Activated B cell treated with CpG ODN at 0.5 μM for 24 hours (primary cell): ENCODE measurements at regions of chr19 and their contacts with region 1.

Region 1: DNA sequence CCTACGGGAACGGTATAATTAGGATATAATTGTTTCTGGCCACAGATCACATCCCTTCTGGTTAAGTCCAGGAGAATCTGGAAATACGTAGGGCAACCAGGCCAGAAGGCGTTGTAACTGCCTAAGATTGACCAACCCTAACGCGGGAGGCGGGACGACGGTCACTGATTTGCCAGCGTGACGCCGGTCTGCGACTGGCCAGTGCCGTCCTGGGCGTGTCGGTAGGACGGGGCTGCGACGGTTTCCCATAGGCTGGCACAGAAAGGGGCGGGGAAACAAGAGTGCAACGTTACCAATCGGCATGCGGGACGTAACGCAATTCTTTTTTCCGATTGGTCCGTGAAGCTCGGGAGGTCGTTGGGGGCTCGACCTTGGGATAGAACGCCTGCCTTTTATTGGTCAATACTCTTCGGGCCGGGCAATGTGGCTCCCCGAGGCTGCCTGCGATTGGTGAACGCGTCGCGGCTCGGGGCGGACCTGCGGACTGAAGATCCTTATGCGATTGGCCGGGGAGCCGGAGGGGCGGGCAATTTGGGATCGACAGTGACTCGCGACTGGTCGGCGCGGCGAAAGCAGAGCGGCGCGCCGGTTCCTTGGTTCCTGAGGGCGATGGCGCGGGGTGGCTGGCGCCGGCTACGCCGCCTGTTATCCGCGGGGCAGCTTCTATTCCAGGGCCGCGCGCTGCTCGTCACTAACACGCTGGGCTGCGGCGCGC is at the start of gene MPV17L2:
- DNase-seq: peak; percentile 90
- ATAC-seq: peak; percentile 83
- H3K4me3 Mint-ChIP-seq: peak within 1 kb of the TSS; percentile 87
- H3K27ac Mint-ChIP-seq: peak within 1 kb of the TSS; percentile 95
- H3K4me1 Mint-ChIP-seq: peaks cover 40% of the 10 kb centered on the region
- H3K27me3 Mint-ChIP-seq: no peaks in the 10 kb centered on the region
- CTCF ChIP-seq: no peak
- total RNA-seq, gene MPV17L2: 17.3 and 17.9 TPM in 2 replicates

Region 2: DNA sequence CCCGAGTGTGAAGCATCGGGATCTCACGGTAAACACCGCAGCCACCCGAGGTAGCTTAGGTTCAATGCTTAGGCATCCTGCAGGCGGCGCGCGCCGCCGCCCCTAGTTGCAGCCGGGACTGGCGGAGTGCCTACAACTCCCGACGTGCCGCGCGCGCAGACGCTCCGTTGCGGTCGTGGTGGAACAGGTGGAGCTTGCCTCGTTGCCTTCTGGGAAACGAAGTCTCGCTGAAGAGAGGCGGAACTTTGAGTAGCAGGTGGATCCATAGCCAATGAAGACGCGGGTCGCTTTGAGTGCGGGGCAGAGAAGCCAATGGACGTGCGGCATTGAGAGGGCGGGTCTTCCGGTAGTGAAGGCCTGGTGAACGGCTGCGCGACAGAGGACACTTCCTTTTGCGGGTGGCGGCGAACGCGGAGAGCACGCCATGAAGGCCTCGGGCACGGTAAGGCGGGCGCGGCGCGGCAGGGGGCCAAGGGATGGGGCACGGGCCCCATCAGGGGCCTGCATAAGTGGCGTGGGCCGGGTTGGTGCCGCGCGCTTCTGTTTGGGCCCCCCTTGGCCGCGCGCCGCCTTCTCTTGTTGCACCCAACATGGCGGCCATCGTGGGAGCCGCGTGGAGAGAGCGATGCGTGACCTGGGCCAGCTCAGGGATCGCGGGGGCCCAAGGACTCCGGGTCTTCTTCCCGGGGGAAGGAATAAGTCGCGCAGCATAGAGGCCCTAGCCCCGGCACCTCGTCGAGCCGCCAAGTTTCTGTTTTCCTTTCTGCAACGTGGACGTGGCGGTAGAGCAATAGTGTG is 333.1 kb before region 1 on chr19 and contains the start of gene RPL18A:
- CTCF ChIA-PET with region 1: no interaction called
- POLR2A ChIA-PET with region 1: no interaction called
- intact Hi-C with region 1: no loop called
- DNase-seq: peak; percentile 85
- ATAC-seq: peak; percentile 91
- H3K4me3 Mint-ChIP-seq: peak within 1 kb of the TSS; percentile 99
- H3K27ac Mint-ChIP-seq: peak within 1 kb of the TSS; percentile 98
- H3K4me1 Mint-ChIP-seq: peaks cover 47% of the 10 kb centered on the region
- H3K27me3 Mint-ChIP-seq: no peaks in the 10 kb centered on the region
- CTCF ChIP-seq: no peak
- total RNA-seq, gene RPL18A: 4,113 and 4,404 TPM in 2 replicates

Region 3: GRCh38 chr19:18007044-18007916 is 185.6 kb before region 1 on chr19:
- CTCF ChIA-PET with region 1: no interaction called
- POLR2A ChIA-PET with region 1: interaction called, 14 read pairs
- intact Hi-C with region 1: no loop called
- DNase-seq: peak; percentile 83
- ATAC-seq: peak; percentile 61
- H3K4me3 Mint-ChIP-seq: peak overlapping the region; percentile 93
- H3K27ac Mint-ChIP-seq: peak overlapping the region; percentile 92
- H3K4me1 Mint-ChIP-seq: peaks cover 40% of the 10 kb centered on the region
- H3K27me3 Mint-ChIP-seq: no peaks in the 10 kb centered on the region
- CTCF ChIP-seq: peak; percentile 84

Region 4: GRCh38 chr19:18160971-18161635 is 31.7 kb before region 1 on chr19:
- CTCF ChIA-PET with region 1: interaction called, 5 read pairs
- POLR2A ChIA-PET with region 1: interaction called, 14 read pairs
- intact Hi-C with region 1: no loop called
- DNase-seq: peak; percentile 90
- ATAC-seq: peak; percentile 97
- H3K4me3 Mint-ChIP-seq: peak overlapping the region; percentile 24
- H3K27ac Mint-ChIP-seq: peak overlapping the region; percentile 18
- H3K4me1 Mint-ChIP-seq: peaks cover 16% of the 10 kb centered on the region
- H3K27me3 Mint-ChIP-seq: no peaks in the 10 kb centered on the region
- CTCF ChIP-seq: no peak

Region 5: DNA sequence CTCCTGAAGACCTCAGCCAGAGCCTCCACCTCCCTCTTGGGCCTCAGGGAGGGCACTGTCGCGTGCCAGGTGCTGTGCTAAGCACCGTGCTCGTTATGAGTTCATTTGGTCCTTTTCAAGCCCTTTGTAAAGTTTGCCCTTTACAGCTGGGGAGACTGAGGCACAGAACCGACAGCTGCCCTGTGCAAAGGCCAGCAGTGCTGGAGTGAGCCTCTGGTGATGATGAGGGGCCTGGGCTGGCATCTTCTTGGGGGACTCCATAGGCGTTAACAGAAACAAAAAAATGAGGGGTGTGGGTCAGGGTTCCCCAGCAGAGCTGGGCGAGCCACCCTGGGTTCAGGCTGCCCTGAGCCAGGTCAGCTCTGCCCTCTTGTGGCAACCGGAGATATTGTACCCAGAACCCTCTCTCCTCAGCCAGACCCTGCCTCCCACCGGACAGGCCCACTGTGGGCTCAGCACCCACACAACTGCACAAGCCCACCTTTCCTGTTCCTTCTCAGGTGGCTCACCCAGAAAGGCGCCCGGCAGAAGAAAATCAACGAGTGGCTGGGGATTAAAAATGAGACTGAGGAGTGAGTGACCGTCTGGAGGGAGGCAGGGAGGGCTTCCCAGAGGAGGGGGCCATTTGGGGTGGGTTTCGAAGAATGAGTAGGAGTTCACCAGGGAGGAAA is 24.7 kb before region 1 on chr19:
- CTCF ChIA-PET with region 1: interaction called, 19 read pairs
- POLR2A ChIA-PET with region 1: interaction called, 437 read pairs
- intact Hi-C with region 1: loop called (anchors 1 kb)
- DNase-seq: peak; percentile 52
- ATAC-seq: peak; percentile 34
- H3K4me3 Mint-ChIP-seq: peak overlapping the region; percentile 66
- H3K27ac Mint-ChIP-seq: peak overlapping the region; percentile 82
- H3K4me1 Mint-ChIP-seq: peaks cover 53% of the 10 kb centered on the region
- H3K27me3 Mint-ChIP-seq: no peaks in the 10 kb centered on the region
- CTCF ChIP-seq: peak; percentile 44

Region 6: GRCh38 chr19:18173572-18174288 is 19.1 kb before region 1 on chr19 and contains the start of gene IFI30:
- CTCF ChIA-PET with region 1: interaction called, 19 read pairs
- POLR2A ChIA-PET with region 1: interaction called, 437 read pairs
- intact Hi-C with region 1: loop called (anchors 1 kb)
- DNase-seq: peak; percentile 85
- ATAC-seq: peak; percentile 62
- H3K4me3 Mint-ChIP-seq: peak within 1 kb of the TSS; percentile 94
- H3K27ac Mint-ChIP-seq: peak within 1 kb of the TSS; percentile 92
- H3K4me1 Mint-ChIP-seq: peaks cover 90% of the 10 kb centered on the region
- H3K27me3 Mint-ChIP-seq: no peaks in the 10 kb centered on the region
- CTCF ChIP-seq: no peak
- total RNA-seq, gene IFI30: 251 and 255 TPM in 2 replicates

Region 7: GRCh38 chr19:18179957-18180356 is 12.9 kb before region 1 on chr19:
- CTCF ChIA-PET with region 1: interaction called, 23 read pairs
- POLR2A ChIA-PET with region 1: interaction called, 437 read pairs
- intact Hi-C with region 1: loop called (anchors 1 kb)
- DNase-seq: no peak
- ATAC-seq: peak; percentile 23
- H3K4me3 Mint-ChIP-seq: peak overlapping the region; percentile 53
- H3K27ac Mint-ChIP-seq: peak overlapping the region; percentile 79
- H3K4me1 Mint-ChIP-seq: peaks cover 66% of the 10 kb centered on the region
- H3K27me3 Mint-ChIP-seq: no peaks in the 10 kb centered on the region
- CTCF ChIP-seq: no peak

Region 8: GRCh38 chr19:18322759-18323460 is 130.1 kb after region 1 on chr19 and contains the start of gene LSM4:
- CTCF ChIA-PET with region 1: interaction called, 3 read pairs
- POLR2A ChIA-PET with region 1: interaction called, 13 read pairs
- intact Hi-C with region 1: loop called (anchors 1 kb)
- DNase-seq: peak; percentile 98
- ATAC-seq: peak; percentile 94
- H3K4me3 Mint-ChIP-seq: peak within 1 kb of the TSS; percentile 85
- H3K27ac Mint-ChIP-seq: peak within 1 kb of the TSS; percentile 91
- H3K4me1 Mint-ChIP-seq: peaks cover 46% of the 10 kb centered on the region
- H3K27me3 Mint-ChIP-seq: no peaks in the 10 kb centered on the region
- CTCF ChIP-seq: no peak
- total RNA-seq, gene LSM4: 59.2 and 70.3 TPM in 2 replicates